ENCODE measurements at regions of chr2 and their contacts with region 1.

Region 1: DNA sequence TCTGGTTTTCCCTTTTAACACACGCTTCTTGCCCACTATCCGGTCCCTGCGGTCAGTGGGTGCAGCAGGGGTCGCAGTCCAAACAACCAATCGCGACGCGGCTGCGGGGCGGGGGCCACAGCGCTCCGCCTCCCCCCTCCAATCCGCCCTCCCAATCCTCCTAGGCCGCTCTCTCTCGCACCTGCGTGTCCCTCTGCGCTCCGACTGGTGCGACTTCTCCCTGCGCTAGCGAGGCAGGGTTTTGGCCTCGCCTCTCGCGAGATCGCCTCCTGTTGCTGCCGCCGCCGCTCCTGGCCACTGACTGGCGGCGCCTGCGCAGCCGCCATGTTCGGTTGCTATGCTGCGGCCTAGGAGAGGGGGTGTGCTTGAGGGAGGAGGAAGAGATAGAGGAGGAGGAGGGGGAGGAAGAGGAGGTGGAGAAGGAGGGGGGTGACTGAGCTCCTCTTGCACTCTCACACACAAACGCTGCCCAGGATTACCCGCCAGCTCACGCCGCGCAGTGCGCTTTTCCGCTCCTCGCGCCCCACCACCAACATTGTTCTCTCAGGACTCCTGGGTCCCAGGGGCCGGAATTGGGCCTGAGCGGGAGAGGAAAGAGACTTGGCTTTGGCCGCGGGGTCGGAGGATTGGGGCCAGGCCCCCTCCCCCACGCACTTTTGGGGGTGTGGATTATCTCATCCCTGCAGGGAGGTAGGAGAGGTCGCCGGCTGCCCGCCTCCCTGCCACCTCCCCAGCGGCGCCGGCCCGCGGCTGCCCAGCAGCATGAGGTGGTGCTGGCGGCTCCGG is at the start of gene PTPN4:
- DNase-seq: peak; percentile 94 to 96
- ATAC-seq: peak; percentile 86 to 90
- H3K4me3 ChIP-seq: peak within 1 kb of the TSS; percentile 61 to 89 (median 84)
- H3K27ac ChIP-seq: peak within 1 kb of the TSS; percentile 91 to 96 (median 95)
- H3K4me1 ChIP-seq: peaks cover 47 to 50% of the 10 kb centered on the region in 2 donors
- H3K27me3 ChIP-seq: no peaks in the 10 kb centered on the region
- CTCF ChIP-seq: no peak
- POLR2A ChIP-seq: peak; percentile 81 to 86
- total RNA-seq, gene PTPN4: 12.7 to 37.8 (median 33.5) TPM

Region 2: GRCh38 chr2:119366649-119367471 is 392.8 kb before region 1 on chr2 and contains the starts of genes C2orf76 and DBI:
- in situ Hi-C with region 1: no loop called
- intact Hi-C with region 1: loop called (anchors 10 kb)
- DNase-seq: peak; percentile 94 to 96
- ATAC-seq: peak; percentile 84 to 86
- H3K4me3 ChIP-seq: peak within 1 kb of the TSS; percentile 67 to 81 (median 78)
- H3K27ac ChIP-seq: peak within 1 kb of the TSS; percentile 87 to 95 (median 95)
- H3K4me1 ChIP-seq: peaks cover 44 to 47% of the 10 kb centered on the region in 2 donors
- H3K27me3 ChIP-seq: no peaks in the 10 kb centered on the region
- CTCF ChIP-seq: peak in 1 of 5 experiments; percentile 9
- POLR2A ChIP-seq: peak; percentile 90 to 91
- total RNA-seq, gene C2orf76: 0.61 to 5.9 (median 2.6) TPM in 3 of 4 donors, not detected in the other
- total RNA-seq, gene DBI: 17.3 to 102 (median 55.2) TPM

Region 3: DNA sequence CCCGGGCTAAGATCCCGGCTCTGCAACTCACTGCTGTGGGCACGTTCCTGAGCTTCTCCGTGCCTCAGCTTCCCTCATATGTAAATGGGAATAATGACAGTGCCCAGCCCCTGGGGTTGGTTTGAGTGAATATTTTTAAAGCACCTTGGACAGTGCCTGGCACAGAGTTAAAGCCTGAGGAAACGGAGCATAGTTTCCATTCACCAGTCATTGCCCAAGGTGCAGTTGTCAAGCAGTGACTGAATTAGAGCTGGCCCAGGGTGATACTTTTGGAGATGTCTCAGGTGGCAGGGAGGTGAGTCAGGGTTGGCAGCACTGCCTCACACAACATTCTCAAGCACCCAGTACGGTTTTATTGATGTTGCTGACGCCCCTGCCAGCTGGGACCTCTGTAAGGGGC is 68.5 kb before region 1 on chr2:
- in situ Hi-C with region 1: no loop called
- intact Hi-C with region 1: no loop called
- DNase-seq: peak in 1 of 2 donors; percentile 46
- ATAC-seq: peak; percentile 70 to 78
- H3K4me3 ChIP-seq: no peak overlapping the region
- H3K27ac ChIP-seq: no peak overlapping the region
- H3K4me1 ChIP-seq: no peaks in the 10 kb centered on the region
- H3K27me3 ChIP-seq: no peaks in the 10 kb centered on the region
- CTCF ChIP-seq: no peak
- POLR2A ChIP-seq: no peak

Region 4: DNA sequence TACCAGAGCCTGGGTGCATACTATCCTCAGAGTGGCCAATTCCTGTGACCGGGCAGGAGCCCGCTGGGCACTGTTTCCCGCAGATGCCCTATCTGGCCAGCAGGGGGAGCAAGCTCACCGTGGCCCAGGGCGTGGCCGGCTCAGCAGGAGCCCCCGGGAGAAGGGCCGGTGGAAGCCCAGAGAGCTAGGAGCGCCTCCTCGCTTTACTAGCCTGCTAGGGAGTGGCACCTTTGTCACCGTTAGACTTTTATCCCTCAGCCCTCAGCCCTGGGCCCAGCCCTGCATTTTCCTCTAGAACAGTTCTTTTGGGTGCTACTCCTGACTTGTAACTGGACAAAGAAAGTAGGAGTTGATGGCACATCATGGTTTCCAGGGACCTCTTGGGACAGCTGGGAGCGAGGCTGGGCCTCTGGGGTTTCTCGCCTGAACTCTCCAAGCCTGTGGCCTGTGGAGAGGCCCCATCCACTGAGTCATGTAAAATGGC is 56.7 kb before region 1 on chr2:
- in situ Hi-C with region 1: no loop called
- intact Hi-C with region 1: no loop called
- DNase-seq: peak; percentile 48 to 57
- ATAC-seq: peak; percentile 72 to 92
- H3K4me3 ChIP-seq: no peak overlapping the region
- H3K27ac ChIP-seq: no peak overlapping the region
- H3K4me1 ChIP-seq: no peaks in the 10 kb centered on the region
- H3K27me3 ChIP-seq: no peaks in the 10 kb centered on the region
- CTCF ChIP-seq: peak; percentile 77 to 99 (median 94)
- POLR2A ChIP-seq: no peak

Region 5: GRCh38 chr2:119943058-119943457 is 183.4 kb after region 1 on chr2:
- in situ Hi-C with region 1: no loop called
- intact Hi-C with region 1: loop called (anchors 5 kb)
- DNase-seq: no peak
- ATAC-seq: no peak
- H3K4me3 ChIP-seq: no peak overlapping the region
- H3K27ac ChIP-seq: no peak overlapping the region
- H3K4me1 ChIP-seq: peaks cover 21 to 28% of the 10 kb centered on the region in 2 donors
- H3K27me3 ChIP-seq: no peaks in the 10 kb centered on the region
- CTCF ChIP-seq: no peak
- POLR2A ChIP-seq: no peak

Region 6: DNA sequence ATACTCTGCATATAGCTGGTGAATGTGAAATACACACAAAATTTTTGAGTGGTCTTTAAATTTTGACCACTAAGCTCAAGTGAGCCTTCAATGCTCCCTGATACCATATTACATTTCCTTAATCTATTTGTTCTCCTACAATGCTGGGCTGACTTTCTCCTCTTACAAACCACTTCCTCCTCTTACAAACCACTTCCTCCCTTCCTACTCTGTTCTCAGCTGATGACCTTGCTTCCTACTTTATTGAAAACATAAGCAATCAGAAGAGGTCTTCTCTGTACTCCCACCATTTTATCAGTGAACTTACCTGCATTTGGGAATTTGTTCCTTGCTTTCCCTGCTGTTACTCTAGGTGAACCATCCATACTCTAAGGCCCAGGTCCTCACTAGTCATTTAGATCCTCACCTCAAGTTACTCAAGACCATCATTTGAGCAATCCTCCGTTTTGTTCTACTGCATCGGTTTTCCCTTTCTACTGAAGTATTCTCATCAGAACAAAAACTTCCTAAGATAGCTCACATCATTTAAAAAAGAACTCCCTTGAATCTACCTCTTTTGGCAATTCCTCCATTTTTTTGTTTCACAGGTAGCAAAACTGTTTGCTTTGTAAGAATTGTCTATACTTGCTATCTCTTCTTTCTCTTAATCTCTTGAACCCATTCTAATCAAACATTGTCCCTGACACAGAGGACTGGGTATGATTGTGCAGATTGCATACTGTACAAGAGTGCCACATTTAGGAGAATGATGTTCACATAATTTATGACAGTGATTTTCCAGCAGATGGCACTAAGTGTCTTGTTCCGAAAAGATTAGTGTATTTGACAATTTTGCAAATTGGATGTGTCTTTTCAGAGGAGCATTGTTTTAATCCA is 349.8 kb after region 1 on chr2:
- in situ Hi-C with region 1: no loop called
- intact Hi-C with region 1: loop called (anchors 5 kb)
- DNase-seq: no peak
- ATAC-seq: no peak
- H3K4me3 ChIP-seq: no peak overlapping the region
- H3K27ac ChIP-seq: peak overlapping the region in 2 of 4 donors; percentile 7 to 78
- H3K4me1 ChIP-seq: peaks cover 28 to 33% of the 10 kb centered on the region in 2 donors
- H3K27me3 ChIP-seq: no peaks in the 10 kb centered on the region
- CTCF ChIP-seq: peak in 4 of 5 experiments; percentile 31 to 45 (median 38)
- POLR2A ChIP-seq: no peak

Region 7: GRCh38 chr2:120223034-120223912 is 463.6 kb after region 1 on chr2 and contains the start of gene TMEM185B:
- in situ Hi-C with region 1: no loop called
- intact Hi-C with region 1: loop called (anchors 5 kb)
- DNase-seq: peak; percentile 74 to 86
- ATAC-seq: peak; percentile 96 to 97
- H3K4me3 ChIP-seq: peak within 1 kb of the TSS; percentile 70 to 78 (median 70)
- H3K27ac ChIP-seq: peak within 1 kb of the TSS; percentile 86 to 96 (median 90)
- H3K4me1 ChIP-seq: peaks cover 25% of the 10 kb centered on the region in 2 donors
- H3K27me3 ChIP-seq: no peaks in the 10 kb centered on the region
- CTCF ChIP-seq: peak in 3 of 5 experiments; percentile 20 to 41 (median 26)
- POLR2A ChIP-seq: peak; percentile 63 to 71
- total RNA-seq, gene TMEM185B: 10.8 to 23.5 (median 15.4) TPM

Measured in gastrocnemius medialis (tissue), 4 donors.